ENCODE measurements at regions of chr12 and their contacts with region 1.

Region 1: GRCh38 chr12:93766796-93767523 is 89.8 kb downstream of the CRADD start:
- DNase-seq: peak; percentile 85
- ATAC-seq: peak; percentile 88
- H3K4me3 ChIP-seq: no peak overlapping the region
- H3K27ac ChIP-seq: no peak overlapping the region
- H3K4me1 ChIP-seq: peaks cover 15% of the 10 kb centered on the region; the same call in 1 of the 2 replicates
- H3K27me3 ChIP-seq: no peaks in the 10 kb centered on the region
- CTCF ChIP-seq: peak; percentile 93

Region 2: GRCh38 chr12:93502802-93503623 is 263.9 kb before region 1 on chr12:
- CTCF ChIA-PET with region 1: interaction called, 3 read pairs
- POLR2A ChIA-PET with region 1: no interaction called
- intact Hi-C with region 1: loop called (anchors 2 kb)
- DNase-seq: peak; percentile 65
- ATAC-seq: peak; percentile 33; the same call in 1 of the 2 replicates
- H3K4me3 ChIP-seq: no peak overlapping the region
- H3K27ac ChIP-seq: no peak overlapping the region
- H3K4me1 ChIP-seq: no peaks in the 10 kb centered on the region
- H3K27me3 ChIP-seq: no peaks in the 10 kb centered on the region
- CTCF ChIP-seq: peak; percentile 92

Region 3: GRCh38 chr12:93785262-93786010 is 18.5 kb after region 1 on chr12:
- CTCF ChIA-PET with region 1: interaction called, 12 read pairs
- POLR2A ChIA-PET with region 1: no interaction called
- intact Hi-C with region 1: no loop called
- DNase-seq: peak; percentile 98
- ATAC-seq: peak; percentile 93
- H3K4me3 ChIP-seq: peak overlapping the region; percentile 13; the same call in 1 of the 2 replicates
- H3K27ac ChIP-seq: peak overlapping the region; percentile 96
- H3K4me1 ChIP-seq: peaks cover 66% of the 10 kb centered on the region
- H3K27me3 ChIP-seq: no peaks in the 10 kb centered on the region
- CTCF ChIP-seq: no peak

Region 4: GRCh38 chr12:93839064-93839463 is 72.1 kb after region 1 on chr12:
- CTCF ChIA-PET with region 1: interaction called, 6 read pairs
- POLR2A ChIA-PET with region 1: no interaction called
- intact Hi-C with region 1: loop called (anchors 1 kb)
- DNase-seq: peak; percentile 35
- ATAC-seq: peak; percentile 48
- H3K4me3 ChIP-seq: no peak overlapping the region
- H3K27ac ChIP-seq: no peak overlapping the region
- H3K4me1 ChIP-seq: 0 out of 2 replicates have a peak, but pooled peaks cover 5% of the 10 kb centered on the region
- H3K27me3 ChIP-seq: no peaks in the 10 kb centered on the region
- CTCF ChIP-seq: peak; percentile 47

Region 5: GRCh38 chr12:93979189-93979588 is 212.2 kb after region 1 on chr12:
- CTCF ChIA-PET with region 1: interaction called, 5 read pairs
- POLR2A ChIA-PET with region 1: no interaction called
- intact Hi-C with region 1: loop called (anchors 1 kb)
- DNase-seq: peak; percentile 65
- ATAC-seq: peak; percentile 42; the same call in 1 of the 2 replicates
- H3K4me3 ChIP-seq: no peak overlapping the region
- H3K27ac ChIP-seq: no peak overlapping the region
- H3K4me1 ChIP-seq: peaks cover 5% of the 10 kb centered on the region
- H3K27me3 ChIP-seq: no peaks in the 10 kb centered on the region
- CTCF ChIP-seq: peak; percentile 74

Measured in PC-3 (cell line).